Gastrocnemius medialis (tissue), 4 donors: ENCODE measurements at regions of chr16 and their contacts with region 1.

Region 1: GRCh38 chr16:11396241-11397048 is 51.2 kb downstream of the RMI2 start:
- DNase-seq: peak; percentile 50 to 77
- ATAC-seq: peak; percentile 67 to 74
- H3K4me3 ChIP-seq: no peak overlapping the region
- H3K27ac ChIP-seq: peak overlapping the region in 2 of 4 donors; percentile 10 to 75
- H3K4me1 ChIP-seq: peaks cover 3 to 4% of the 10 kb centered on the region in 2 donors
- H3K27me3 ChIP-seq: no peaks in the 10 kb centered on the region
- CTCF ChIP-seq: peak; percentile 97 to 99 (median 98)
- POLR2A ChIP-seq: no peak

Region 2: GRCh38 chr16:11721781-11722467 is 325.5 kb after region 1 on chr16:
- in situ Hi-C with region 1: loop called in 2 of 4 experiments (anchors 5 kb)
- intact Hi-C with region 1: no loop called
- DNase-seq: no peak
- ATAC-seq: no peak
- H3K4me3 ChIP-seq: no peak overlapping the region
- H3K27ac ChIP-seq: peak overlapping the region; percentile 7 to 57 (median 16)
- H3K4me1 ChIP-seq: peaks cover 6 to 7% of the 10 kb centered on the region in 2 donors
- H3K27me3 ChIP-seq: no peaks in the 10 kb centered on the region
- CTCF ChIP-seq: no peak
- POLR2A ChIP-seq: no peak

Region 3: GRCh38 chr16:11819798-11820197 is 423.4 kb after region 1 on chr16:
- in situ Hi-C with region 1: loop called (anchors 10 to 25 kb)
- intact Hi-C with region 1: no loop called
- DNase-seq: no peak
- ATAC-seq: no peak
- H3K4me3 ChIP-seq: no peak overlapping the region
- H3K27ac ChIP-seq: no peak overlapping the region
- H3K4me1 ChIP-seq: peaks cover 7 to 15% of the 10 kb centered on the region in 2 donors
- H3K27me3 ChIP-seq: no peaks in the 10 kb centered on the region
- CTCF ChIP-seq: no peak
- POLR2A ChIP-seq: no peak